ENCODE measurements at regions of chr20 and their contacts with region 1.

Region 1: GRCh38 chr20:53828682-53829254 is 235.1 kb upstream of the ZNF217 start:
- DNase-seq: no peak
- H3K4me3 ChIP-seq: peak overlapping the region; percentile 23 to 47 (median 38)
- H3K27ac ChIP-seq: peak overlapping the region; percentile 71 to 84 (median 76)
- H3K4me1 ChIP-seq: peaks cover 20 to 39% (median 36%) of the 10 kb centered on the region in 4 donors
- H3K27me3 ChIP-seq: no peaks in the 10 kb centered on the region
- CTCF ChIP-seq: no peak
- EP300 ChIP-seq: no peak
- POLR2A ChIP-seq: no peak

Region 2: DNA sequence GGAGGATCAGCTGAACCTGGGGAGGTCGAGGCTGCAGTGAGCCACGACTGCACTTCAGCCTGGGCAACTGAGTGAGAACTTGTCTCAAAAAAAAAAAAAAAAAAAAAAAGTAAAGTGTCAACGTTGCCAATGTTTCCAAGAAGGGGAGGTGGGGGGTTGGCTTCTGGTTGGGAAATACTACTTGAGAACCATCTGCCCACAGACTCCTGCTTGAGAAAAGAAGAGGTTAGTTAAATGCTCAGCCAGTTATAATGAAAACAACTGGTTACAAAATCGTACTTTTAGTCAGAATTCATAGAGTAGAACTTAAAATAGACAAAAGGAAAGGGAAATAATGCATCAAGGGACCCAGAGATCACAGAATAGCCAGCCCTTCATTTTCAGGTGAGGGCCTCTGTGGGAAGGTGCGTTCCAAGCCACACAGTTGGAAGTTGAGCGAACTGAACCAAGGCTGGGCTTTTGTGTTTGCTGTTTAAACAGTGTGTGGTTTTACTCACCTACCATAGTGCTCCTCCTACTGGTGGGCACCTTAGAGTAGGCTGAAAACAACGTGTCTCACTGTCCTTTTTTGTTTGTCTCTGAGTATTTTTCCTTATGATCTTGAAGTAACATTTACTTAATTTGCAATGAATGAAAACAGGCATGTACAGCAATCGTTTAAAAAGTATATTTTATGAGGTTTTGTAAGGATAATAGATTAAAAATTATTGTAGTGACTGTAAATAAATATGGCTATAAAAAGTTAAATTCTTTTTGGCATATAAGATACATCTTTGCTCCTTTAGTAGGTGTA is 40.9 kb after region 1 on chr20:
- intact Hi-C with region 1: loop called (anchors 5 kb)
- DNase-seq: no peak
- H3K4me3 ChIP-seq: no peak overlapping the region
- H3K27ac ChIP-seq: peak overlapping the region; percentile 32 to 62 (median 44)
- H3K4me1 ChIP-seq: peaks cover 33 to 58% (median 50%) of the 10 kb centered on the region in 4 donors
- H3K27me3 ChIP-seq: no peaks in the 10 kb centered on the region
- CTCF ChIP-seq: peak; percentile 77 to 84 (median 79)
- EP300 ChIP-seq: no peak
- POLR2A ChIP-seq: no peak

Region 3: GRCh38 chr20:54058420-54059139 is 229.8 kb after region 1 on chr20:
- intact Hi-C with region 1: no loop called
- DNase-seq: no peak
- H3K4me3 ChIP-seq: no peak overlapping the region
- H3K27ac ChIP-seq: no peak overlapping the region
- H3K4me1 ChIP-seq: peaks cover 0 to 9% (median 0%) of the 10 kb centered on the region in 4 donors
- H3K27me3 ChIP-seq: no peaks in the 10 kb centered on the region
- CTCF ChIP-seq: no peak
- EP300 ChIP-seq: no peak
- POLR2A ChIP-seq: no peak

Measured in esophagus muscularis mucosa (tissue), 4 donors.